ENCODE measurements at regions of chr15 and their contacts with region 1.

Region 1: DNA sequence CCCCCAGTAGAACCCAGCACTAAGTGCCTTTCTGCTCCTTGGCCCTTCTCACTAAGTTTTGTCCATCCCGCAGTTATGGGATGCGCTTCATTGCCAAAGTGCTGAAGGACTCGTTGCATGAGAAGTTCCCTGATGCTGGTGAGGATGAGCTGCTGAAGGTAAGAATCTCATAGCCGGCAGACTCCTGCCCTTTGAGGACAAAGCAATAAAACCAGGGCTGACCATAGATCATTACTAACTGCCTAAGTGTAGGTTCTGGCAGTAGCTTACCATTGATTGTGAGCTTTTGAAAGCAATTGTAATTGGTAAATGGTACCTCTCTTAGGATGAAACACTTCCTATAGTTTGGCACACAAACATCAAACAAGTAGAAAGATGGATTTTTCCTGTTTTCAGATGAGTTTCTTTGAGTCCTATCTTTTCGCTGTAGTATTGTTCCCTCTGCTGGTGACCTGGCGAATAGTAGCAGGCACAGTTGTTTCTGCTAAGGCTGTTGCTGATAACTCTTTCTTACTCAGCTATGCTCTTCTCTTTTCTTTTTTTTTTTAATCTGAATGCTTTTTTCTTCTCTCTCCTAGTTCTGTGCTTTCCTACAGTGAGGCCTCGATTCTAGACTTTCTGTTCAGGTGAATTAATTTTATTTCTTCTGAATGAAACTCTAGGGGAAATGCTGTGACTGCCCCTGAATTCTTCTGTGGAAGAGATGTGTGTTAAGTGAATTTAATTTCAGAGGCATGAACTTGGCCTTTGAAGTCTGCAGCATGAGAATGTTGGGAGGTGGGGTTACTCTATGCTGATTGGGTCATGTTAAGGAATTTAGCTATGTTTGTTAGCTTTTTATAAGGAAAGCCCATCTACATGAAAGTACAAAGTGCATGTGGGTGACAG is 47.4 kb upstream of the CRTC3 start:
- DNase-seq: peak; percentile 62
- ATAC-seq: no peak
- H3K4me3 ChIP-seq: no peak overlapping the region
- H3K4me3 Mint-ChIP-seq: no peak overlapping the region
- H3K27ac ChIP-seq: no peak overlapping the region
- H3K27ac Mint-ChIP-seq: peak overlapping the region; percentile 28
- H3K4me1 ChIP-seq: peaks cover 34 to 45% of the 10 kb centered on the region in 2 donors
- H3K4me1 Mint-ChIP-seq: peaks cover 35% of the 10 kb centered on the region
- H3K27me3 ChIP-seq: no peaks in the 10 kb centered on the region
- H3K27me3 Mint-ChIP-seq: no peaks in the 10 kb centered on the region
- CTCF ChIP-seq: peak; percentile 78

Region 2: DNA sequence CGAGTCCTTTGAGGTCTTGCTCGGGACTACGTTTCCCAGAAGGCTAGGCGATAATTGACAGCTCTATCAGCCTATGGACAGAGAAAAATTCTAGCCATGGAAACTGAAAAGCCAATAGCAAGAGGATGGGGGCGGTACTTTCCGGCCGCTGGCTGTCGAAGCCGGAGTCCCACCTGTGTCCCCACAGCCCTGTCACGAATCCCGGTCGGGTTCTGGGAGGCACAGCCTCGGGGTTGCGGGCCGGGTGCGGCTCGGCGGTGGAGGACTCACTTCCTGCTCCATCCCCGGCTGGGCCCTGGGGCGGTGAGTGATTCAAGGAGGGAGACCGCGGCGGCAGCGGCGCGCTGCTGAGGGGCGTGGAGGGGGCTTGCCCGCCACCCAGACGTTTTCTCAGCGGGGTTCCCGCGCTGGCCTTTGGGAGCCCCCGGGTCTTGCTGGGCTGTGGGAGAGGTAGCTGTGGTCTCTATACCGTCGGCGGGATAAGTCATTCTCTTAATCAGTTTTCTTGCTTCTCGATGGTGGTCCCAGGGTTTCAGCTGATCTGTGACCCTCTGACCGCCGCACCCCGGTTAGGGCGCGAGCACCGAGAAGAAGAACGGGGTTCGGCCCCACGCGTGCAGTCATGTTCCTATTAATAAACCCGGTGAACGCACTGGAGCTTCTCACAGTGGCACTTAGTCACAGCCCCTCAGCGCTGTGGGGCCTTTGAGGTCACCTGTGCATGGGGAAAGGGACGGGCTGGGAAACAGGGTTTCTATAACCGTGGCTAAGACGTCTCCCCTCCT is 130.1 kb before region 1 on chr15 and contains the start of gene ZNF774:
- CTCF ChIA-PET with region 1: interaction called, 10 read pairs
- POLR2A ChIA-PET with region 1: no interaction called
- intact Hi-C with region 1: no loop called
- DNase-seq: peak; percentile 97
- ATAC-seq: peak; percentile 99
- H3K4me3 ChIP-seq: peak within 1 kb of the TSS; percentile 53 to 86 (median 81)
- H3K4me3 Mint-ChIP-seq: peak within 1 kb of the TSS; percentile 90
- H3K27ac ChIP-seq: peak within 1 kb of the TSS in 1 of 2 donors; percentile 60
- H3K27ac Mint-ChIP-seq: peak within 1 kb of the TSS; percentile 71
- H3K4me1 ChIP-seq: peaks cover 3 to 10% of the 10 kb centered on the region in 2 donors
- H3K4me1 Mint-ChIP-seq: peaks cover 7% of the 10 kb centered on the region
- H3K27me3 ChIP-seq: no peaks in the 10 kb centered on the region
- H3K27me3 Mint-ChIP-seq: no peaks in the 10 kb centered on the region
- CTCF ChIP-seq: no peak
- total RNA-seq, gene ZNF774: 0.54 and 1.4 TPM in 2 replicates

Region 3: DNA sequence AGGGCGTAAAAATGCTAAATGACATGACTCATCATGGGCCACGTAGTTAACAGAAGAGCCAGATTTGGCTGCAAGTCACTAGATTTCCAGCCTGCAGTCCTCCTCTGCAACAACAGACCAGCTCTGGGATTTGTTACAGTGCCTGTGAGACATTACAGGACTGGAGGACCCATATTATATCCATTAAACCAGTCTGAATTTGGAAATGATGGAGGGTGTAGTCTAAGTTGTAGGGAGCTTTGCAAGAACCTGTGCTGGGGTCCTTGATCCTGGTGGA is 119.5 kb before region 1 on chr15:
- CTCF ChIA-PET with region 1: interaction called, 65 read pairs
- POLR2A ChIA-PET with region 1: no interaction called
- intact Hi-C with region 1: loop called (anchors 1 kb)
- DNase-seq: no peak
- ATAC-seq: no peak
- H3K4me3 ChIP-seq: no peak overlapping the region
- H3K4me3 Mint-ChIP-seq: no peak overlapping the region
- H3K27ac ChIP-seq: no peak overlapping the region
- H3K27ac Mint-ChIP-seq: no peak overlapping the region
- H3K4me1 ChIP-seq: peaks cover 5 to 9% of the 10 kb centered on the region in 2 donors
- H3K4me1 Mint-ChIP-seq: peaks cover 4% of the 10 kb centered on the region
- H3K27me3 ChIP-seq: no peaks in the 10 kb centered on the region
- H3K27me3 Mint-ChIP-seq: no peaks in the 10 kb centered on the region
- CTCF ChIP-seq: no peak

Region 4: GRCh38 chr15:90465140-90465922 is 17.0 kb before region 1 on chr15:
- CTCF ChIA-PET with region 1: interaction called, 18 read pairs
- POLR2A ChIA-PET with region 1: no interaction called
- intact Hi-C with region 1: no loop called
- DNase-seq: no peak
- ATAC-seq: no peak
- H3K4me3 ChIP-seq: no peak overlapping the region
- H3K4me3 Mint-ChIP-seq: no peak overlapping the region
- H3K27ac ChIP-seq: no peak overlapping the region
- H3K27ac Mint-ChIP-seq: no peak overlapping the region
- H3K4me1 ChIP-seq: no peaks in the 10 kb centered on the region
- H3K4me1 Mint-ChIP-seq: no peaks in the 10 kb centered on the region
- H3K27me3 ChIP-seq: no peaks in the 10 kb centered on the region
- H3K27me3 Mint-ChIP-seq: no peaks in the 10 kb centered on the region
- CTCF ChIP-seq: no peak

Region 5: GRCh38 chr15:90571063-90571541 is 88.7 kb after region 1 on chr15:
- CTCF ChIA-PET with region 1: no interaction called
- POLR2A ChIA-PET with region 1: no interaction called
- intact Hi-C with region 1: no loop called
- DNase-seq: peak; percentile 68
- ATAC-seq: peak; percentile 63
- H3K4me3 ChIP-seq: peak overlapping the region in 2 of 5 experiments; percentile 30 to 38
- H3K4me3 Mint-ChIP-seq: peak overlapping the region; percentile 49
- H3K27ac ChIP-seq: peak overlapping the region; percentile 47 to 63
- H3K27ac Mint-ChIP-seq: peak overlapping the region; percentile 50
- H3K4me1 ChIP-seq: peaks cover 48 to 51% of the 10 kb centered on the region in 2 donors
- H3K4me1 Mint-ChIP-seq: peaks cover 60% of the 10 kb centered on the region
- H3K27me3 ChIP-seq: no peaks in the 10 kb centered on the region
- H3K27me3 Mint-ChIP-seq: no peaks in the 10 kb centered on the region
- CTCF ChIP-seq: no peak

Region 6: DNA sequence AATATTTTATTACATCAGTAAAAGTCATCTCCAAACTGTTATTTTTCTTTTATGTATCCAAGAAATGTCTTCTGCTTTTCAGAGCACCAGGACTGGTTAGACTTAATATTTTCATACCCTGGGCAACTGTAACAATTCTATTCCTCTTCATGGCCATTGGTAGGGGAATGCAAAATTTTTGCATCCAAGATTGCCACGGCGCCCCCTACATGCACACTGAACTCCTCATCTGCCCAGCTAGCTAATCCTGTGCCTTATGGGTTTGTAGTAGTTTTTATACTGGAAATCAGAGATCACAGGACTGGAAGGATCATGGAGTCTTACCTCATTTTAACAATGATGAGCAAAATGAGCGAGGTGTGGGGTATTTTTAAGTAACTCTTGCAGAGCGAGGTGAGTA is 121.5 kb after region 1 on chr15:
- CTCF ChIA-PET with region 1: interaction called, 24 read pairs
- POLR2A ChIA-PET with region 1: no interaction called
- intact Hi-C with region 1: no loop called
- DNase-seq: peak; percentile 46
- ATAC-seq: no peak
- H3K4me3 ChIP-seq: no peak overlapping the region
- H3K4me3 Mint-ChIP-seq: no peak overlapping the region
- H3K27ac ChIP-seq: no peak overlapping the region
- H3K27ac Mint-ChIP-seq: no peak overlapping the region
- H3K4me1 ChIP-seq: peaks cover 18 to 28% of the 10 kb centered on the region in 2 donors
- H3K4me1 Mint-ChIP-seq: peaks cover 32% of the 10 kb centered on the region
- H3K27me3 ChIP-seq: no peaks in the 10 kb centered on the region
- H3K27me3 Mint-ChIP-seq: no peaks in the 10 kb centered on the region
- CTCF ChIP-seq: peak; percentile 52

Region 7: DNA sequence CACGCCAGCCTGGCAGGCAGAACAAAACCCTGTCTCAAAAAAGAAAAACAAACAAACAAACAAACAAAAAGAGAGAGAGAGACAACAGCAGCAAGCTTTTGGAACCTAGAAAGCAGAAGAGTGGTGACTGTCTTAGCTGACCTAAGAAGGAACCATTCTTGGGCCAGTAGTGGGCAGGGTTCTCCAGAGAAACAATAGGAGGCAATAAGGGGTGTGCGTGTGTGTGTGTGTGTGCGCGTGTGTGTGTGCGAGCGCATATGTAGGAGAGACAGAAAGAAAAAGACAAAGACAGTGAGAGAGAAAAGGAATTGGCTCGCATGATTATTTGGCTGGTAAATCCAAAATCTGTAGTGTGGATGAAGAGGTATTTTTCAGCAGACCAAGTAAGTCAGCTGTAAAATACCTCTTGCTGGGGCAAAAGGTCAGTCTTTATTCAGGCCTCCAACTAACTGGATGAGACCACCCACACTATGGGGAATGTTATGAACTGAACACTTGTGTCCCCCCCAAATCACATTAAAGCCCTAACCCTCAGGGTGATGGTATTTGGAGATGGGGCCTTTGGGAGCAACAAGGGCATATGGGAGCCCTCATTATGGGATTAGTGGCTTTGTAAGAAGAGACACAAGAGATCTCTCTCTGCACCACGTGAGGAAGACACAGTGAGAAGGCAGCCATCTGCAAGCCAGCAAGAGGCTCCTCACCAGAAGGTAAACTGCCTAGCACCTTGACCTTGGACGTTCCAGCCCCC is 219.7 kb after region 1 on chr15:
- CTCF ChIA-PET with region 1: no interaction called
- POLR2A ChIA-PET with region 1: no interaction called
- intact Hi-C with region 1: no loop called
- DNase-seq: no peak
- ATAC-seq: no peak
- H3K4me3 ChIP-seq: no peak overlapping the region
- H3K4me3 Mint-ChIP-seq: no peak overlapping the region
- H3K27ac ChIP-seq: no peak overlapping the region
- H3K27ac Mint-ChIP-seq: no peak overlapping the region
- H3K4me1 ChIP-seq: no peaks in the 10 kb centered on the region
- H3K4me1 Mint-ChIP-seq: no peaks in the 10 kb centered on the region
- H3K27me3 ChIP-seq: no peaks in the 10 kb centered on the region
- H3K27me3 Mint-ChIP-seq: no peaks in the 10 kb centered on the region
- CTCF ChIP-seq: no peak